Head of caudate nucleus (tissue), 42 donors: ENCODE measurements at regions of chr2 and their contacts with region 1.

Region 1: DNA sequence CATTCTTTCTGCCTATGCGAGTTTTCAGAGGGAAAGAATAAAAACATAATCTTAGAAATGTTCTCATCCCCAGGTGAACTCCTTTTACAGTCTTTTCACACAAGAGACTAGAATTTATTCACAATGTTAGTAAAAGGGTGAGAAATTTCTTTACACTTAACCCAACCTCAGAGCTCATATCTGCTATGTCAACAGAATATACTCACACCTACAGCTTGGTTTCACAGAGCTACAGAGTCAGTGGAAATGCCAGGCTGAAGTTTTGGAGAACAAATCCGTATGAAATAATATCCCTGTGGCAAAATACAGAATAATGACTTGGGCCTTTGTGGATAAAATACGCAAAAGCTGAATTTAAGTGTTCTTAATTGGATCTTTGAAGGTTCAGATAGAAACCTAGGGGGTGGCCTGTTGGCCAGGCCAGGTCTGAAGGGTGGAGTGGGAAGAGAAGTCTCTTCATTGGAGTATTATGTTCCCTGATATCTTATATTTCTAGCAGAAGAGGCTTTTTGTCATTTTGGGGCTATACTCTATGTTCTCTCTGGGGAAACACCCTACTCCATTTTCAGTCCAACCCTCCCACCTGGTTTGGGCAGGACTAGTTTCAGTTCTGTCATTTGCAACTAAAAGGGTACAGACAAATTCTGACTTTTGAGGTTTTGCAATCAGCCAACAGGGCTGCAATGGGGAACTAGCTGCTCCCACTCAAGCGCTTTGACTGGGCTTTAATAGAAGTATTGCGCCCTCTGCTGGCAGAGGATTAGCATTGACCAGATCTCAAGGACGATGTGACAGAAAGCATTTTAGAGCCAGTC is 25.7 kb downstream of the FBXO48 start:
- DNase-seq: peak; percentile 56 to 93 (median 82)

Region 2: GRCh38 chr2:68121873-68122679 is 319.3 kb before region 1 on chr2:
- intact Hi-C with region 1: loop called (anchors 5 kb)
- DNase-seq: peak; percentile 73 to 96 (median 91)

Region 3: GRCh38 chr2:68256093-68256450 is 185.3 kb before region 1 on chr2:
- intact Hi-C with region 1: no loop called
- DNase-seq: no peak

Region 4: DNA sequence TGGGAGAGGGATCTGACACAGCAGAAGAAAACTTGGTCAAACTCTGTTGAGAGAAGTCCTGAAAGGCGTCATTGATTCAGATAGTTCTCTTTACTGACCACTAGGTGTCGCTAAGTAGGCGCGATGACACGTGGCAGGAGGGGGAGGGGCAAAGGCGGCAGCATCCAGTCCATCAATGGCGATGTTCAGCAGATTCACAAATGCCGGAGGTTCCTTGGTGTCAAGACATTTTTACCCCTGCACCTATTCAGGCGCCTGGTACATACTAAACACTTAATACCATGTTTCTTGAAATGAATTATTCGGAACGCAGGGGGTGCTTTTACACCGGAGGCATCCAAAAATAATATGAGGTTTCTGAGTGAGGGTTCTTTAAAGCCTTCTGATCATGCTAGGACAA is 79.3 kb before region 1 on chr2:
- intact Hi-C with region 1: loop called (anchors 5 kb)
- DNase-seq: peak in 40 of 42 donors; percentile 19 to 81 (median 60)